Posterior vena cava (tissue), 2 donors: ENCODE measurements at regions of chr11 and their contacts with region 1.

Region 1: GRCh38 chr11:119666463-119667131 is 62.4 kb downstream of the NECTIN1 start:
- DNase-seq: peak; percentile 94

Region 2: GRCh38 chr11:119594639-119595249 is 71.9 kb before region 1 on chr11:
- intact Hi-C with region 1: no loop called
- DNase-seq: no peak

Region 3: GRCh38 chr11:119624102-119624615 is 42.4 kb before region 1 on chr11:
- intact Hi-C with region 1: no loop called
- DNase-seq: no peak

Region 4: GRCh38 chr11:119728651-119729580 is 62.3 kb after region 1 on chr11 and contains the start of gene NECTIN1:
- intact Hi-C with region 1: loop called in 1 of 2 experiments (anchors 5 kb)
- DNase-seq: peak; percentile 97
- total RNA-seq, gene NECTIN1: 10.6 to 11.4 TPM

Region 5: GRCh38 chr11:120108154-120108865 is 441.7 kb after region 1 on chr11:
- intact Hi-C with region 1: loop called (anchors 2 to 5 kb)
- DNase-seq: peak; percentile 88